Right ventricle myocardium superior (tissue), 1 donor: ENCODE measurements at regions of chr9 and their contacts with region 1.

Region 1: DNA sequence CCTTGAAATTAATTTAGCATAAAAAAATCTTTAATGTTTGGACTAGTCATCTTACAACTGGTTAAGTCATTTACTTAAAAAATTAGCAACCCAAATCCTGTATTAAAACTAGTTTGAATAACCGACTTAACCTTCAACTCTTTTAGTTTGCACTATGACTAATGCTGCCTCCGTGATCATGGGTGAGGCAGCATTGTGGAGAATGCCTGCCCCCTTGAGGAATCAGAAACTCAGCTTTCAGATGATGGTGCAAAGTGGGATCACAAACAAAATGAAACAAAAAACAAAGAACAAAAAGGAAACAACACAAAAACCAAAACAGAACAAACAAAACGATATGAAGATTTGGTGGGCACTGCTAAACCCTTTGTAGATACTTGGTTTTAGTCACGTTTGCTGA is 127.0 kb upstream of the PALM2AKAP2 start:
- DNase-seq: no peak
- ATAC-seq: peak; percentile 89

Region 2: GRCh38 chr9:109579191-109579948 is 73.6 kb before region 1 on chr9:
- intact Hi-C with region 1: loop called (anchors 5 kb)
- DNase-seq: no peak
- ATAC-seq: peak; percentile 87